Ascending aorta (tissue), 2 donors: ENCODE measurements at regions of chr5 and their contacts with region 1.

Region 1: DNA sequence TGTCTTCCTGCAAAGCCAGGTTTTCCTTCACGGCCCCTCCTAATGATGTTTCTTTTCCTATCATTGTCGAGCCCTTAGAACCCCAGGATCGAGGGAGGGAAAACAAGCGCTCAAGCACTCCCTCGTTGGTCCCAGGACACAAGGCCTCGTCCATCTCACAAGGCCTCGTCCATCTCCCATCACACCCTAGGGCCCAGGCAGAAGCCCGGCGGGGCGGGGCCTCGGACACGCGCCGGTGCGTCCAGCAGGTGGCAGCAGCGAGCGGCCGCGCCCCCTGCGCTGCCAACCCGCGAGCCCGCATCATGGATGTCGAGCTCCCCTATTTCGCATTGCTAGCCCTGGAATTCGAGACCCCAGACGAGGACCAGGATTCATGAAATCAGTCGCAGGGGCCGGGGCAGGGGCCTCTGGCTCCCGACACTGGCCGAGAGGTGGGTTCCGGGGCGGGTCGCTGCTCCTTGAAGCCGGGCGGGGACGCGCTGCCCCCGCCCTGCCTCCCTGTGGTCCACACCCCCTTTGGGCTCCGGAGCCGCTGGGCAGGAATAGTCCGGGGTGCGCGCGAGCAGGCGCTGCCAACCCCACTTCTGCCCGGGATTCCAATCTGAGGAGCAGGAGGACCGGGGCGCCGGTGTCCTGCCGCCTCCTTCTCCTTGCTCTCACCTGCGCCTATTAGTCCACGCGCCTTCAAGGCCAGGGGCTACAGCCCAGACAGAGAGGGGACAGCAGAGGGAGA is at the start of gene ABLIM3:
- DNase-seq: peak; percentile 18 to 87
- H3K4me3 ChIP-seq: peak within 1 kb of the TSS; percentile 77 to 88
- H3K27ac ChIP-seq: peak within 1 kb of the TSS; percentile 62 to 73
- H3K4me1 ChIP-seq: peaks cover 7 to 13% of the 10 kb centered on the region in 2 donors
- H3K27me3 ChIP-seq: no peaks in the 10 kb centered on the region
- CTCF ChIP-seq: peak; percentile 85 to 94 (median 90)
- total RNA-seq, gene ABLIM3: 25.8 TPM

Region 2: DNA sequence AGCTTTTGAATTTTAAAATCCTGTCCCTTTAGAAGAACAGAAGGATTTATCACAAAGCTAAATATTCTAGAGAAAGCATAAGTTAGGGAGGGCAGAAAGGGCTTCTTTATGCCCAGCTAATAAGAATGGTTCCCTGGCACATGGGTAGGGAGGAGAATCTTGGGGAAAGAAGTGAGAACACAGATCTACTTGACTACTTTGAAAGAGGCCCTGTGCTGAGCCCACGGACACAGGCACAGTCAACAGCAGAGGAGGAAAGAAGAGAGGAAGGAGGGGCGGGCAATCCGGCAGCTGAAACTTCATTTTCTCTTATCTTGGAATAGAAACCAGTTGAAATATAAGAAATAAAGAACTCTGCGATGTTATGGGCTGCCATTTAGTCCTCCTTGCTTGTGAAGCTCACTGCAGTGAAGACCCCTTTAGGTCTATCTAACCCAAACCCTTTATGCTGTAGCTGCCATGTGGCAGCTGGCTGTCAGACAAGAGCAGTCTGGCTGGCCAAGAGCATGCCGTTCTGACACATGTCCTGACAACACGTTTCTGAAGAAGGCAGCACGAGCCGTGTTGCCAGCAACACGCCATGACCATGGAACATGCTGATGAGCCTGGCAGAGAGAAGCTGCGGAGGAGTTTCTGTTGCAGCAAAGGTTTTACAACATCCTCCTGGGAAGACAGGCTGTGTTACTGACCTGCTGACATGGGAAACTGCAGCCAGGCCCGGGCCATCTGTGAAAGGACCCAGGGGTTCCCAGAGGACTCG is 34.1 kb after region 1 on chr5:
- intact Hi-C with region 1: loop called (anchors 5 kb)
- DNase-seq: peak in 1 of 2 donors; percentile 72
- H3K4me3 ChIP-seq: no peak overlapping the region
- H3K27ac ChIP-seq: peak overlapping the region; percentile 77 to 79
- H3K4me1 ChIP-seq: peaks cover 12 to 17% of the 10 kb centered on the region in 2 donors
- H3K27me3 ChIP-seq: no peaks in the 10 kb centered on the region
- CTCF ChIP-seq: no peak

Region 3: GRCh38 chr5:149228618-149229297 is 87.4 kb after region 1 on chr5:
- intact Hi-C with region 1: loop called (anchors 1 kb)
- DNase-seq: peak in 1 of 2 donors; percentile 74
- H3K4me3 ChIP-seq: no peak overlapping the region
- H3K27ac ChIP-seq: peak overlapping the region in 1 of 2 donors; percentile 17
- H3K4me1 ChIP-seq: peaks cover 8 to 14% of the 10 kb centered on the region in 2 donors
- H3K27me3 ChIP-seq: no peaks in the 10 kb centered on the region
- CTCF ChIP-seq: peak; percentile 55 to 82 (median 72)

Region 4: DNA sequence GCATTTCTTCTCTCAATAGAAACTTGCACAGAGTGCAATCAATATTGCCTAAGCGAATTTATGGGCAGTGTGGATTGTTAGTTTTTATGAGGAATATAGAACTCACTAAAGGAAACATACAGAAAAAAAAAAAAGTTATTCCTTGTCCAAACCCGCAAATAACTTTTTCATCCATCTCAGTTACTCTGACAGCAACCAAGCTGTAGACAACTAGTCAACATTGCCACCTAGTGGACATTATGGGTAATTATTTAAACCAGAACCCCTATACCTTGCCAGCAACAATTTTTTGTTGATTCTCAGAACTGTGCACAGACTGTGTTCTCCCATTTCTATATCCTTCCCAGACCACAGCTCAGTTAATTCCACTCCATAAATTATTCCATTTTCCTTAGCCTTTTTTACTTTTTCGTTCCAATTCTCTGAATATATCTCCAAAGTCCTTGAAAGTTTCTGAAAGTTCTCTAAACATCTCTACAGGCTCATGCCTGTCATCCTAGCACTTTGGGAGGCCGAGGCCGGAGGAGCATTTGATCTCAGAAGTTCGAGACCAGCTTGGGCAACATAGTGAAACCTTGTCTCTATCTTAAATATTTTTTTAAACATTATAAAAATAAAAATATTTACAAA is 127.7 kb after region 1 on chr5:
- intact Hi-C with region 1: loop called (anchors 1 kb)
- DNase-seq: no peak
- H3K4me3 ChIP-seq: no peak overlapping the region
- H3K27ac ChIP-seq: no peak overlapping the region
- H3K4me1 ChIP-seq: peaks cover 0 to 3% of the 10 kb centered on the region in 2 donors
- H3K27me3 ChIP-seq: no peaks in the 10 kb centered on the region
- CTCF ChIP-seq: peak; percentile 53 to 61 (median 56)

Region 5: GRCh38 chr5:149298842-149299404 is 157.5 kb after region 1 on chr5:
- intact Hi-C with region 1: no loop called
- DNase-seq: no peak
- H3K4me3 ChIP-seq: no peak overlapping the region
- H3K27ac ChIP-seq: peak overlapping the region in 1 of 2 donors; percentile 9
- H3K4me1 ChIP-seq: no peaks in the 10 kb centered on the region
- H3K27me3 ChIP-seq: no peaks in the 10 kb centered on the region
- CTCF ChIP-seq: no peak

Region 6: DNA sequence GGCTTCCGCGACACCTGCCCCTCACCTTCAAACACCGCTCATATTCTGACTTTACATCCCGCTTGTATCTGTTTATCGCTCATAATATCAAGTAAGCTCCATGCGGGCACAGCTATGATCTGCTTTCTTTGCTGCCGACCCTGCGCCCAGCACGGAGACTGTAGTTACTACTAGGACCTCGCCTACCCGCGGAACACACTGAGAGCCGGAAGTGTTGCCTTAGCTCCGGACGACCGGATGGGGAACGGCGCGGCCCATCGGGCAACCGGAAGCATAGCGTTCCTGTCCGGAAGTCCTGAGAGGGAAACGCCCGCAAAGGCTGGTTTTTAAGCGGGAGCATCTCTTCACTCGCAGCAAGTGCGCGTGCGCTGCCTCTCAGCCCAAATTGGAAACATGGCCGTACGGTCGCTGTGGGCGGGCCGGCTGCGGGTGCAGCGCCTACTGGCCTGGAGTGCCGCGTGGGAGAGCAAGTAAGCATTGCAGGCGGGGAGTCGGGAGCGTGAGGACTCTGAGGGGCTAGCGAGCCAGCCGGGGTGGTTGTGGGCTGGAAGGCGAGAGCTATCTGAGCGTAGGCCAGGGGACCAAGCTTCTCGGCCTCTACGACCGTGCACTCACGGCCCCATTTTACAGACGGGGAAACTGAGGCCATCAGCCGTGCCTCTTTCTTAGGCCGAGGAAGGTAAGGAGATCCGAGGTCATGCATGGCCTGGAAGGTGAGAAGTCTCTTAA is 203.9 kb after region 1 on chr5 and contains the start of gene GRPEL2:
- intact Hi-C with region 1: loop called (anchors 10 kb)
- DNase-seq: peak; percentile 74 to 98
- H3K4me3 ChIP-seq: peak within 1 kb of the TSS; percentile 70 to 76
- H3K27ac ChIP-seq: peak within 1 kb of the TSS; percentile 71 to 80
- H3K4me1 ChIP-seq: peaks cover 0 to 8% of the 10 kb centered on the region in 2 donors
- H3K27me3 ChIP-seq: no peaks in the 10 kb centered on the region
- CTCF ChIP-seq: no peak
- total RNA-seq, gene GRPEL2: 7.8 TPM

Region 7: DNA sequence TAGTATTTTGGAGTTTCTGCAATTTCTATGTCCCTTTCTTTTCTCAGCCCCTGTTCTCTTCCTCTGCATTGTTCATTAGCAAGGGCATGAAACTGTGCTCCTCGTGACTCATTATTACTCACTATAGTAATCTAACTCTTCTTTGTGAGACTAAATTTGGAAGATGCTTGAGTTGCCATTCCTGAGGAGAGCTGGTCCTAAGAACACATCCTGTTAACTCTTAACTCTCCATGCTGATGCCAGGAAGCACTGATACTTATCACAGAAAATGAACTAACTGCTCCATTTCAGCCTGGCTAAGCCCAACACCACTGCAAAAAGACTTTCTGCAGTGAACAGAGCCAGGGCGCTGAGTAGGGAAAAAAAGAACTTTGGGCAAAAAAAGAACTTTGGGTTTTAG is 420.5 kb after region 1 on chr5:
- intact Hi-C with region 1: loop called (anchors 10 kb)
- DNase-seq: no peak
- H3K4me3 ChIP-seq: no peak overlapping the region
- H3K27ac ChIP-seq: peak overlapping the region; percentile 82 to 92
- H3K4me1 ChIP-seq: peaks cover 0 to 25% of the 10 kb centered on the region in 2 donors
- H3K27me3 ChIP-seq: no peaks in the 10 kb centered on the region
- CTCF ChIP-seq: no peak